ENCODE measurements at regions of chr3 and their contacts with region 1.

Region 1: GRCh38 chr3:27147215-27147614 is 222.0 kb downstream of the NEK10 start:
- DNase-seq: no peak
- ATAC-seq: peak in 1 of 4 donors; percentile 44
- H3K4me3 ChIP-seq: no peak overlapping the region
- H3K27ac ChIP-seq: peak overlapping the region in 1 of 12 donors; percentile 8
- H3K4me1 ChIP-seq: peaks cover 0 to 8% (median 0%) of the 10 kb centered on the region in 12 donors
- H3K27me3 ChIP-seq: no peaks in the 10 kb centered on the region
- CTCF ChIP-seq: no peak
- POLR2A ChIP-seq: no peak

Region 2: DNA sequence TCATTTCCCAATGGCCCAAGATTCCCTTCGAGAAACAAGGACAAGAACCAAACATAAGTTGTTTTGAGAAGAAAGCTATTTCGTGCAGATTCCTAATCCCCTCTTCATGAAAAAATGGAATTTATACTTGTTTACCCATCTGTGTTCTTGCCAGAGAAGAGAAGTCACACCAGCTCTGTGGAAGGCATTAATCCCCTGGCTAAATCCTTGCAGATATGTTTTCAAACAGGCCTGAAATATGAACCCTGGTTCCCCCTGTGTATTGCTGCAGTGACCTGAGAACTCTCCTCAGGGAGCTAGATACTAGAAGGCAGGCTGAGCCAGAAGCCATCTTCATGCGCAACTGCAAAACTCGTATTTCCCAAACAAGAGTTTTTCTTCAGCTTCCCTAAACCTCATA is 115.7 kb before region 1 on chr3:
- intact Hi-C with region 1: no loop called
- DNase-seq: no peak
- ATAC-seq: no peak
- H3K4me3 ChIP-seq: no peak overlapping the region
- H3K27ac ChIP-seq: no peak overlapping the region
- H3K4me1 ChIP-seq: no peaks in the 10 kb centered on the region
- H3K27me3 ChIP-seq: no peaks in the 10 kb centered on the region
- CTCF ChIP-seq: no peak
- POLR2A ChIP-seq: no peak

Region 3: DNA sequence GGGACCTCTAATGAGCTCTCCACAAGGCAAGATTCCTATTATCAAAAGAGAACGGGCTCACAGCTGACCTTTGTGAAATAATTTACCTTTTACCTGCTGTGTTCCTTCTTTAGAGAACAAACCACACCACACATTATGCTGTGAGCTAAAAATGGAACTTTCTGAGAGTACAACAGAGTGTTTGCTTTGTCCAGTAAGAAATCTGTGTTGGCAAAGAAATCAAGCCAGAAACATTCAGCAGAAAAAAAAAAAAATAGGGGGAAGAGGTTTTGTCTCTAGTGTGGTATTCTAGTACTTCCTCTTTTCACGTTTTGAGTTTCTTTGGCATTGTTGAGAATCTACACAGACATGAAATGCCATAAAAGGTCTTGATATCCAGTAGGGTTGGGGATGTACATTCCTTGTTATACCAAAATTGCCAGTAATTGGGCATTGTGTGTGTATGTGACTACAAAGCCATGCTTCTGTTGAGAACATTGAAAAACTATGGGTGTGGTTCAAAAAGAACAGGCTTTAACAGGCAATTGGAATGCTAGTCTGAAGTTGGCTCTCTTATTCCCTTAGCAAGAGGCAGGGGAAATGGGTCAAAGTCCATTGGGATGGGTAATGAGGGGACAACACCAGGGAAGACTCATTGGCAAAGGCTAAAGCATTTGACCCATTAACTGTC is 51.5 kb before region 1 on chr3:
- intact Hi-C with region 1: no loop called
- DNase-seq: no peak
- ATAC-seq: no peak
- H3K4me3 ChIP-seq: no peak overlapping the region
- H3K27ac ChIP-seq: no peak overlapping the region
- H3K4me1 ChIP-seq: peaks cover 0 to 14% (median under 1%) of the 10 kb centered on the region in 12 donors
- H3K27me3 ChIP-seq: no peaks in the 10 kb centered on the region
- CTCF ChIP-seq: no peak
- POLR2A ChIP-seq: no peak

Region 4: DNA sequence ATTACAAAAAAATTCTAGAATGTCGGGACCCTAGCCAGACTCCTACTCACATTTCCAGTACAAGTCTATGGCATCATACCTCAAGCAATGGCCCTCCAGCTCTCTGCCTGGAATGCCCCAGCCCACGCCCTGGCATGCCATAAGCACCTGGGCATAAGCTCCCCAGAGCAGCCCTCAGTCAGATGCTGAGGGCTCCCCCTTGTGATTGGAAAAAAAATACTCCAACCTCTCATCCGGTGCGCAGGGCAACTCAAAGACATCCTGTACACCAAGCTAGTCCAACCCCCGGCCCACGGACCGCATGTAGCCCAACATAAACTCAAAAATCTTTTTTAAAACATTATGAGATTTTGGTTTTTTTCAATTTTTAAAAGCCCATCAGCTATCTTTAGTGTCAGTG is 106.6 kb after region 1 on chr3:
- intact Hi-C with region 1: loop called in 1 of 10 experiments (anchors 5 kb)
- DNase-seq: peak in 1 of 5 donors; percentile 18
- ATAC-seq: peak; percentile 64 to 73 (median 70)
- H3K4me3 ChIP-seq: no peak overlapping the region
- H3K27ac ChIP-seq: no peak overlapping the region
- H3K4me1 ChIP-seq: no peaks in the 10 kb centered on the region
- H3K27me3 ChIP-seq: no peaks in the 10 kb centered on the region
- CTCF ChIP-seq: peak in 11 of 12 donors; percentile 12 to 50 (median 36)
- POLR2A ChIP-seq: no peak

Measured in heart left ventricle (tissue), 16 donors.